Activated CD4-positive, alpha-beta memory T cell treated with anti-CD3 and anti-CD28 coated beads for 36 hours (primary cell): ENCODE measurements at regions of chr6 and their contacts with region 1.

Region 1: GRCh38 chr6:119078376-119079282 is at the start of gene FAM184A:
- DNase-seq: peak; percentile 77
- H3K4me3 Mint-ChIP-seq: peak within 1 kb of the TSS; percentile 88
- H3K27ac Mint-ChIP-seq: peak within 1 kb of the TSS; percentile 90
- H3K4me1 Mint-ChIP-seq: peaks cover 46% of the 10 kb centered on the region
- H3K27me3 Mint-ChIP-seq: no peaks in the 10 kb centered on the region
- total RNA-seq, gene FAM184A: 7.6 to 10.8 TPM

Region 2: DNA sequence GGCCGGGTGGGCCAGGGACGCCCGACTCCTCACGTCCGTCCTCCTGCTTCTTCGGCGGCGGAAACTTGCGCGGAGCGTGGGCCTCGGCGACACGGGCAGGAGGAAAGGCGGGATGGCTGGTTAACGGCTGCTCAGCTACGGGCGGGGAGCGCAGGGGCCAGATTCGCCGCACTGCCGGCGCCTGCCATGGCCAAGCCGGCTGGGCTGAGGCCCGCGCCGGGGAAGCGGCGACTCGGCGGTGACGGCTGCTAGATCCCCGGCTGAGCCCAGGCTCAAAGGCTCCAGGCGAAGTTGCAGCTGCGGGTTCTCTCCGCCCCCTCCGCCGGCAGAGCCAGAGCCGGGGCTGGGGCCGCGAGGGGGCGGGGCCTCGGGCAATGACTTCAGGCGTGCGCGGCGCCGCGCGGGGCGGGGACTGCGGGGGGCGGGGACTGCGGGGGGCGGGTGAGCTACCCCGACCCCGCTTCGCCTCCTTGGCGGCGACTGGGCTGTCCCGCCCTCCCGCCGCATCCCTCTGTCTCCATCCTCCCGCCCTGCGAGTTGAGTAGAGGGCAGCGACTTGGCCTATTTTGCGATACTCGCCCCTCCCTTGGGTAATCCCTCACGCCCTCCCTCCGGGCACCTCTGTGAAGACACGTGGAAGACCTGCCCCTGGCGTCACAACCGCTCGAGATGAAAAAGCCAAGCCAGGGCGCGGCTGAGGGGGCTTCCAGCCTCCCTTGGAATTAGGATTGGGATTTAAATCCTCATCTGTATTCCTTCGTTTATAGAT is 427.2 kb before region 1 on chr6 and contains the start of gene CEP85L:
- CTCF ChIA-PET with region 1: no interaction called
- POLR2A ChIA-PET with region 1: no interaction called
- intact Hi-C with region 1: loop called (anchors 5 kb)
- DNase-seq: peak; percentile 93
- H3K4me3 Mint-ChIP-seq: peak within 1 kb of the TSS; percentile 87
- H3K27ac Mint-ChIP-seq: peak within 1 kb of the TSS; percentile 93
- H3K4me1 Mint-ChIP-seq: peaks cover 53% of the 10 kb centered on the region
- H3K27me3 Mint-ChIP-seq: no peaks in the 10 kb centered on the region
- total RNA-seq, gene CEP85L: 21.1 to 23.3 TPM

Region 3: DNA sequence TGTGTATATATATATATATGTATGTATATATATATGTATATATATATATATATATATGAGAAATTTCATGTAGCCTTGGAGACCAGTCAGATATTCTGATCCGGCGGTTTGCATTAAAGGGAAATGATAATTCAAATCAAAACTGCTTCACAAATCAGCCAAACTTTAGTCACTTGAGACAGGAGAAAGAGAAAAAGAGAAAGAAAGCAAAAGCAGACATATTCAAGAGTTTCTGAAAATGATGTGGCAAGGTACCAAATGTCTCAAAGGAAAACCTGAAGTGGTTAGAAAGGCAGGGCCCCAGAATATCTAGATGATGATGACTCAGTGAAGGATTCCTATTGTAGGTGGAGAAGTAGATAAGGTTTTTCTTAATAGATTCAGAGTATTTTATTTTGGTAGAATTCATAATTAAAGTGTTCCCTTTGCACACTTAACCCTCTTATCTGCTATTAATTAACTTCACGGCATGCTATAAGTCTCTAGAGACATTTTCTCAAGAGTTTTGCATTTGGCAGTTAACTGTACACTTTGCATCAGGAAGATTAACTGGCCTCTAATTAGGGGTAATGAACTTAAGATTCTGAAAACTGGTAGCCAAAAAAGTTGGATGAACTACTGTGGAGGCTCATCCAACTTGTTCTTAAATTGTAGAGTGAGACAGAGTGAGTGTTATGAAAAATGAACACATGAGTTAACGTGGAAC is 234.8 kb before region 1 on chr6:
- CTCF ChIA-PET with region 1: no interaction called
- POLR2A ChIA-PET with region 1: no interaction called
- intact Hi-C with region 1: loop called (anchors 1 kb)
- DNase-seq: no peak
- H3K4me3 Mint-ChIP-seq: peak overlapping the region; percentile 33
- H3K27ac Mint-ChIP-seq: peak overlapping the region; percentile 34
- H3K4me1 Mint-ChIP-seq: peaks cover 32% of the 10 kb centered on the region
- H3K27me3 Mint-ChIP-seq: no peaks in the 10 kb centered on the region

Region 4: GRCh38 chr6:119043783-119044182 is 34.8 kb before region 1 on chr6:
- CTCF ChIA-PET with region 1: no interaction called
- POLR2A ChIA-PET with region 1: no interaction called
- intact Hi-C with region 1: loop called (anchors 1 kb)
- DNase-seq: no peak
- H3K4me3 Mint-ChIP-seq: no peak overlapping the region
- H3K27ac Mint-ChIP-seq: no peak overlapping the region
- H3K4me1 Mint-ChIP-seq: peaks cover 13% of the 10 kb centered on the region
- H3K27me3 Mint-ChIP-seq: no peaks in the 10 kb centered on the region

Region 5: GRCh38 chr6:119096721-119097565 is 18.3 kb after region 1 on chr6:
- CTCF ChIA-PET with region 1: no interaction called
- POLR2A ChIA-PET with region 1: no interaction called
- intact Hi-C with region 1: loop called (anchors 1 kb)
- DNase-seq: no peak
- H3K4me3 Mint-ChIP-seq: no peak overlapping the region
- H3K27ac Mint-ChIP-seq: no peak overlapping the region
- H3K4me1 Mint-ChIP-seq: peaks cover 15% of the 10 kb centered on the region
- H3K27me3 Mint-ChIP-seq: no peaks in the 10 kb centered on the region

Region 6: DNA sequence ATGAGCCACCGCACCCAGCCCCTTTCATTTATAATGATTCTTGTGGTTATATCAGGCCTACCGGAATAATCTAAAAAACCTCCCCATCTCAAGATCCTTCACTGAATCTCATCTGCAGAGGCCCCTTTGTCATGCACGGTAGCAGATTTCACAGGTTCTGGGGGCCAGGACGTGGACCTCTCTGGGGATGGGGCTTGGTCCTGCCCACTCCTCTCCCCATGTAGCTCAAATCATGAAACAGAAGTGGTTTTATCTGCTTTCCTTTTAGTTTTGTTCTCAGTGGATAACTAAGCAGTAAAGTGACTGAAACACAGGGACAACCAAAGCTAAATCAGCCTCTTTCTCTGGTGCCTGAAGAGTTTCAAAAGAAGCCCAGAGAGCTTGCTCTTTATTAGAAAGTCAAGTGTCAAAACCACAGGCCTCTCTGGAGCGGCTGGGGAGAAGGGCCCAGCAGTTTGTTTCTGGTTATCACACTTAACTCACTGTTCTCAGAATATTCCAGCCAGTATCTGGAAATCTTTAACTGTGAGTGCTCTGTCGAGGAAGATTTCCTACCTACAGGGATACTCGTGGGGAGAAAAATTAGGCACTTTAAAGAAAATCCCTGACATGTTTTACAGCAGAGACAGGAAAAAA is 60.4 kb after region 1 on chr6:
- CTCF ChIA-PET with region 1: no interaction called
- POLR2A ChIA-PET with region 1: no interaction called
- intact Hi-C with region 1: no loop called
- DNase-seq: no peak
- H3K4me3 Mint-ChIP-seq: no peak overlapping the region
- H3K27ac Mint-ChIP-seq: no peak overlapping the region
- H3K4me1 Mint-ChIP-seq: peaks cover 3% of the 10 kb centered on the region
- H3K27me3 Mint-ChIP-seq: no peaks in the 10 kb centered on the region

Region 7: GRCh38 chr6:119172824-119173223 is 94.2 kb after region 1 on chr6:
- CTCF ChIA-PET with region 1: no interaction called
- POLR2A ChIA-PET with region 1: no interaction called
- intact Hi-C with region 1: no loop called
- DNase-seq: no peak
- H3K4me3 Mint-ChIP-seq: no peak overlapping the region
- H3K27ac Mint-ChIP-seq: no peak overlapping the region
- H3K4me1 Mint-ChIP-seq: no peaks in the 10 kb centered on the region
- H3K27me3 Mint-ChIP-seq: no peaks in the 10 kb centered on the region

Region 8: GRCh38 chr6:119313937-119314884 is 235.6 kb after region 1 on chr6:
- CTCF ChIA-PET with region 1: no interaction called
- POLR2A ChIA-PET with region 1: no interaction called
- intact Hi-C with region 1: loop called (anchors 2 kb)
- DNase-seq: peak; percentile 61
- H3K4me3 Mint-ChIP-seq: peak overlapping the region; percentile 22
- H3K27ac Mint-ChIP-seq: peak overlapping the region; percentile 89
- H3K4me1 Mint-ChIP-seq: peaks cover 56% of the 10 kb centered on the region
- H3K27me3 Mint-ChIP-seq: no peaks in the 10 kb centered on the region